Activated CD4-positive, alpha-beta T cell treated with anti-CD3 and anti-CD28 coated beads for 36 hours (primary cell): ENCODE measurements at regions of chr6 and their contacts with region 1.

Region 1: DNA sequence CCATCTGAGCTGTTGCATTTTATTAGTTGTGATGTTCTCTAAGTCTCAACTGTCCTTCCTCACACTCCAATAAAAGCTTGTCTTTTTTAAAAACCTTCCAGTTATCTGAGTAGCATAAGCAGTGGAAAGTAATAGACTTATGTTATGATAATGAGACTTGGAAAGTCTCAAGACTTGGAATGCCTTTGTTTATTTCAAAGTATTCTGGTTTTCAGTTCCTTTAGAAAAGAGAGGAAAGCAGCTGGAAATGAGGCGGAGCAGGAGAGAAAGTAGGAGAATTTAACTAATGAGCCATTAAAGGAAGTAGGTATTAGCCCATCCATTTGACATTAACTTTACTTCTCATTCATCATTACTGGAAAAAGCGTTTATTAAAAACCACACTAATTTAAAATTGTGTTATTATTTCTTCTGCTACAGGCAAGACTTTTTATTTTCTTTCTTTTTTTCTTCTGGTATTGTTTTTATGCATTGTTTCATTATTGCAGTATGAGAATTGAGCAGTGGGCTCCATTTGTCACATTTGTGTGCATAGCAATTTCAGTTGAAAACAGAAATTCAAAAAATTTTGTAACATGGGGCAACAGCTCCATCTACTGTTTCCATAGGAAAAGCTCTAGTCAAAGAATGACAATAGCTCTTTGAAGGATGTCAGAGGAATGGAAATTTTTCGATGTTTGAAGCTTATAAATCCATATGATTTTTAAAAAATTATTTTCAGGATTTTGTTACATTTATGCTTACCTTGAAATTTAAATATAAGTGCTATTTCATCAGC is 194.8 kb downstream of the COL9A1 start:
- DNase-seq: no peak
- ATAC-seq: no peak
- H3K4me3 Mint-ChIP-seq: no peak overlapping the region
- H3K27ac Mint-ChIP-seq: no peak overlapping the region
- H3K4me1 Mint-ChIP-seq: no peaks in the 10 kb centered on the region
- H3K27me3 Mint-ChIP-seq: peaks cover 8% of the 10 kb centered on the region

Region 2: DNA sequence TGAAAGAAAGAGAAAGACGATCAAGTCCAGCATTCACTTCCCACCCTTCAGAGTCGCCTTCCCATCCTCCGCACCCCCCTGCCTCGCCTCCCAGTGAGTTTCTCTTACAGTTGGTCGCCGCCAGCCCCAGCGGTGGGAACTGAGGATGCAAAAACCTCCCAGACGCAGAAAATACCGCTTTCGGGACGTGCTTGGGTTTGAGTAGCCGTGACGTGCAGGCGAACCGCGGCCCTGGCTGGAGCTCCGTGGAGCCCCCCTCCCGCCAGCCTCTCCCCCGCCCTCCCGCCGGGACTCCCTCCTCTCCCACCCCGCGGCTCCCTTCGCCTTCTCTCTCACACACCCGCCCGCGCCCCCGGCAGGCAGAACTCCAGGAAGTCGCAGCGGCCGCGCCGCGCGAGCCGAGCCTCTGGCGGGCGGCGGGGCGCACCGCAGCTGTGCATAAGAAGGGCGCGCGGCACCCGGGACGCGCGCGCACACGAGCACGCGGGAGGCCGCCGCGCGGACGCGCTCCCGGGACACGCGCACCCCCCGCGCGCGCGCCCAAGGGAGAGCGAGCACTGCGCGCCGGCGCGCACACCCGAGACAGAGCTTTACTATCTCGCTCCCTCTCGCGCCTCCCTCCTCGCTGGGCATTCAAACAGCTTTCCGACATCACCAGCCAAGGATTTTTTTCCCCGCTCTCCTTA is 1473.2 kb before region 1 on chr6 and contains the start of gene ADGRB3:
- CTCF ChIA-PET with region 1: no interaction called
- POLR2A ChIA-PET with region 1: no interaction called
- intact Hi-C with region 1: loop called in 1 of 2 experiments (anchors 2 kb)
- DNase-seq: peak; percentile 52
- ATAC-seq: peak; percentile 71
- H3K4me3 Mint-ChIP-seq: peak within 1 kb of the TSS; percentile 70
- H3K27ac Mint-ChIP-seq: no peak within 1 kb of the TSS
- H3K4me1 Mint-ChIP-seq: peaks cover 20% of the 10 kb centered on the region
- H3K27me3 Mint-ChIP-seq: peaks cover 50% of the 10 kb centered on the region
- total RNA-seq, gene ADGRB3: not detected

Region 3: DNA sequence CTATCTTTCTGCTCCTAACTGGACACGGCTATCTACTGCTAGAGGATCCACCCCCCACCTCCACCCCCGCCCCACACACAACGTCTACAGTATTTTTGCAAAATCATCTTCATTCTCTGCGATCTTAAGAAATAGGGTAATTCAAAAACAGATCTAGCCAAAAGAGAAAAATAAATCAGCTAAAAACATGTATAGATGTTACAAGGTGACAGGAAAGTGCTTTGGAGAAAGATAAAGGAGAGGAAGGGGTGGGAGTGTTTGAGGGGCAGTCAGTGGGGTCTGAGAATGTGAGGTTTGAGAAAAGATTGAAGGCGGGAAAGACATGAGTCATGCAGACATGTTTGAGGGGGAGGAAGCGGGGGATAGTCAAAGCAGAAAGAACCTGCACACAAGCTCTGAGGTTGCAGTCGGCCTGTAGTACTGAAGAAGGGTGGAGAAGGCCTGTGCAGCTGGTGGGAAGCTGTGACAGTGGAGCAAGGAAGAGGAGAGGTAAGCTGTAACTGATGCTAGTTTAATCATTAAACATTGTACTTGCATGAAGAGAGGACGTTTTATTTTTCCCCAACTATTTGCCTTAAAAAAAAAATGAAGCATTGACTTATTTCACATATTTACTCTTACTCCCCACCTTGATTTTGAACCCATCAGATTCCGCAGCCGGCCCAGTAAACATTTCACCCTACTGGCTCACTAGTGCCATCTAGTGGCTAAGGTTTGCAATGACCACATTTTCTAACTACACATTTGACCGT is 1140.3 kb before region 1 on chr6:
- CTCF ChIA-PET with region 1: no interaction called
- POLR2A ChIA-PET with region 1: no interaction called
- intact Hi-C with region 1: loop called in 1 of 2 experiments (anchors 2 kb)
- DNase-seq: peak; percentile 74
- ATAC-seq: peak; percentile 68
- H3K4me3 Mint-ChIP-seq: no peak overlapping the region
- H3K27ac Mint-ChIP-seq: no peak overlapping the region
- H3K4me1 Mint-ChIP-seq: peaks cover 11% of the 10 kb centered on the region
- H3K27me3 Mint-ChIP-seq: no peaks in the 10 kb centered on the region

Region 4: DNA sequence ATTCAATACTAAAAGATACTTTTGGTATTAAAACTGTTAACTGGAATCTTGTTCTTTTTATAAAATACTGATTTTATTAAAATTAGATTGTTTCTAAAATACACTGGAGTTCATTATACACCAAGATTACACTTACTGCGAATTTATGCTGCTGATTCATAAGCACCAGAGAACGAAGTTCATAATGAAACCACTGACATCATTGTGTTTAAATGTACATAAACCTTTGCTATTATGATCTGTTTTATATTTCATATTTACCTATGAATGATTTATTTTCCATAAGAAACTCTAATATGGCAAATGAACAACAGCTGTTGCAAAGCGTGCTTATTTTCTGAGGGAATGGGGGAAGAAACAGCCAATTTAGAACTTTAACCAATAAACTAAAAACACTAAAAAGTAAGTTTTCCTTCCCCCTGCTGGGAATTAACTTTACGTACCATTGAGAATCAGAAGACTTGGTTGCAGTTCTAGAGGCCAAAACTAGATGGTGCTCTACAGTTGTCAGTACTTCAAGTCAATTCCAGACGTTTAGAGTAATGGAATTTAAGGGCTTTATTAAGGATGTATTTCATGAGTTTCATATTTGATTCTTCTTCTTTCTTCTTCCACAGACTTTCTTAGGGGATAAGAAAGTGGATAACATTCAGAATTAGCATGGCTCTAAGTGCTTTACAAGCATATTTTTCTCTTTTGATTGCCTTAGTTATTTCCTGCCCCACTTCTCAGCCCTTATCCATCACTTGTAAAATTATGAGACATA is 272.4 kb before region 1 on chr6:
- CTCF ChIA-PET with region 1: interaction called, 3 read pairs
- POLR2A ChIA-PET with region 1: no interaction called
- intact Hi-C with region 1: loop called (anchors 2 to 5 kb)
- DNase-seq: no peak
- ATAC-seq: peak; percentile 78
- H3K4me3 Mint-ChIP-seq: no peak overlapping the region
- H3K27ac Mint-ChIP-seq: no peak overlapping the region
- H3K4me1 Mint-ChIP-seq: peaks cover 4% of the 10 kb centered on the region
- H3K27me3 Mint-ChIP-seq: no peaks in the 10 kb centered on the region